GM12878 (cell line): ENCODE measurements at regions of chr11 and their contacts with region 1.

Region 1: DNA sequence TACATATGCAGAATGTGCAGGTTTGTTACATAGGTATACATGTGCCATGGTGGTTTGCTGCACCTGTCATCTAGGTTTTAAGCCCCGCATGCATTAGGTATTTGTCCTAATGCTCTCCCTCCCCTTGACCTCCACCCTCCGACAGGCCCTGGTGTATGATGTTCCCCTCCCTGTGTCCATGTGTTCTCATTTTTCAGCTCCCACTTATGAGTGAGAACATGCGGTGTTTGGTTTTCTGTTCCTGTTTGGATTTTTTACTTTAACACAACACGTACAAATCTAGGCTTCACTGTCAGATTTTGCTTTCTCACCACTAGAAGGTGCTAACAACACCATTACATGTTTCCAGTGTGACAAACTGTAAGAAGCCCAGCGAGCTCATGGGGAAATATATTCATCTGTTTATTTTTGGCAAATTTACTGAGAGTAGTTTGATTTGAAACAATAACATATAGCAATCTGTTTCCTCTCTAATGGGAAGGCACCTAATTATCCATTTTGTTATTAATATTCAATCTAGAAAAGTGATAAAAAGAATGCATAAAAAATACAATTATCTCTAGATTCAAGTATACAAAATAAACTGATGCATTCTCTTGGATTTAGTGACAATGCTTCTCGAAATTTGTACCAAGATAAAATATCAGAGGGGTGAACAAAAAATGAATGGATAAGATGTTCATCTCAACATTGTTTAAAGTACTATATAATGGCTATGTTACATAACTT is 23.2 kb upstream of the BIRC3 start:
- DNase-seq: no peak
- ATAC-seq: peak; percentile 96
- H3K4me3 ChIP-seq: no peak overlapping the region
- H3K27ac ChIP-seq: 0 out of 2 replicates have a peak overlapping the region, but pooled peaks have one; percentile 8
- H3K4me1 ChIP-seq: peaks cover 12% of the 10 kb centered on the region
- H3K27me3 ChIP-seq: no peaks in the 10 kb centered on the region
- CTCF ChIP-seq: peak; percentile 77 to 81 (median 79)
- EP300 ChIP-seq: no peak
- POLR2A ChIP-seq: no peak
- RAD21 ChIP-seq: peak; percentile 84

Region 2: DNA sequence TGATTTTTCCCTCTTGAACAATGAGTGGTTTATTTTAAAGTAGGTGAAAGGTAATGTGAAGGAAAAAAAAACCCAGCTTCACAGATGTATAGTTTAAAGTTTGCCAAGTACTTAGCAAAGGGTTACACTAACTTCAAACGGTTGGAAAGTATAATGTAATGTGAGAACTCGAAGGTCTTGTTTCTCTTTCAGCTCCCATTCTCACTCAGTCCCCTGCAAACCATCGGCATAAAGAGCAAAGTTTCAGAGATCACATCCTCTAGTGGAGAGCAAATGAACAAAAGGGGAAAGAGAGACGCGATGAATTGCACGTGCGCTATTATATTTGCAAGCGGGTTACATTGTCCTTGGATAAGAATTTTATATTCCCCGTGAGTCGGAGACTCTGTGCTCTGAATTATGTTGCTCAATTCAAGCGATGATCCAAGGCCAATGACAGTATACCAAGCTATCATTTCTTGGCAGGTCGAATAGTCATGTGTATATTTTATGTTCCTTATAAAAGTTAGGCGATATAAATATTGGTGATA is 14.3 kb before region 1 on chr11:
- CTCF ChIA-PET with region 1: interaction called, 23 read pairs
- POLR2A ChIA-PET with region 1: no interaction called
- RAD21 ChIA-PET with region 1: interaction called, 13 read pairs
- SMC1A ChIA-PET with region 1: interaction called, 16 read pairs
- in situ Hi-C with region 1: no loop called
- intact Hi-C with region 1: no loop called
- DNase-seq: peak; percentile 68
- ATAC-seq: peak; percentile 96
- H3K4me3 ChIP-seq: no peak overlapping the region
- H3K27ac ChIP-seq: no peak overlapping the region
- H3K4me1 ChIP-seq: peaks cover 4% of the 10 kb centered on the region; the same call in 1 of the 2 replicates
- H3K27me3 ChIP-seq: no peaks in the 10 kb centered on the region
- CTCF ChIP-seq: peak; percentile 16 to 30 (median 27); a peak in 3 of 6 replicates
- EP300 ChIP-seq: 0 out of 4 replicates have a peak, but pooled peaks of 1 of the 2 experiments have one; percentile 18
- POLR2A ChIP-seq: no peak
- RAD21 ChIP-seq: no peak

Region 3: GRCh38 chr11:102317099-102317767 is 23.2 kb after region 1 on chr11 and contains the start of gene BIRC3:
- CTCF ChIA-PET with region 1: interaction called, 219 read pairs
- POLR2A ChIA-PET with region 1: interaction called, 10 read pairs
- RAD21 ChIA-PET with region 1: interaction called, 61 read pairs
- SMC1A ChIA-PET with region 1: interaction called, 255 read pairs
- in situ Hi-C with region 1: no loop called
- intact Hi-C with region 1: loop called (anchors 1 kb)
- DNase-seq: peak; percentile 100
- ATAC-seq: peak; percentile 75
- H3K4me3 ChIP-seq: peak within 1 kb of the TSS; percentile 76
- H3K27ac ChIP-seq: peak within 1 kb of the TSS; percentile 97
- H3K4me1 ChIP-seq: peaks cover 24% of the 10 kb centered on the region
- H3K27me3 ChIP-seq: no peaks in the 10 kb centered on the region
- CTCF ChIP-seq: peak in 2 of 3 experiments; percentile 14 to 20; a peak in 2 of 6 replicates
- EP300 ChIP-seq: peak; percentile 99
- POLR2A ChIP-seq: peak; percentile 99
- RAD21 ChIP-seq: no peak
- polyA plus RNA-seq, gene BIRC3: 63.8 to 92.9 TPM

Region 4: GRCh38 chr11:102332611-102332994 is 38.6 kb after region 1 on chr11:
- CTCF ChIA-PET with region 1: interaction called, 32 read pairs
- POLR2A ChIA-PET with region 1: interaction called, 4 read pairs
- RAD21 ChIA-PET with region 1: interaction called, 9 read pairs
- SMC1A ChIA-PET with region 1: interaction called, 21 read pairs
- in situ Hi-C with region 1: no loop called
- intact Hi-C with region 1: no loop called
- DNase-seq: no peak
- ATAC-seq: peak; percentile 32
- H3K4me3 ChIP-seq: no peak overlapping the region
- H3K27ac ChIP-seq: no peak overlapping the region
- H3K4me1 ChIP-seq: no peaks in the 10 kb centered on the region; the same call in 1 of the 2 replicates
- H3K27me3 ChIP-seq: no peaks in the 10 kb centered on the region
- CTCF ChIP-seq: no peak
- EP300 ChIP-seq: no peak
- POLR2A ChIP-seq: 0 out of 2 replicates have a peak, but pooled peaks have one; percentile 2
- RAD21 ChIP-seq: no peak